Heart right ventricle (tissue), 16 donors: ENCODE measurements at regions of chr18 and their contacts with region 1.

Region 1: GRCh38 chr18:29596959-29597358 is 1420.0 kb upstream of the CDH2 start:
- DNase-seq: no peak
- ATAC-seq: no peak
- H3K4me3 ChIP-seq: no peak overlapping the region
- H3K27ac ChIP-seq: no peak overlapping the region
- H3K4me1 ChIP-seq: no peaks in the 10 kb centered on the region
- H3K27me3 ChIP-seq: no peaks in the 10 kb centered on the region
- CTCF ChIP-seq: no peak

Region 2: GRCh38 chr18:29626094-29626493 is 29.1 kb after region 1 on chr18:
- intact Hi-C with region 1: loop called in 1 of 10 experiments (anchors 2 kb)
- DNase-seq: no peak
- ATAC-seq: no peak
- H3K4me3 ChIP-seq: no peak overlapping the region
- H3K27ac ChIP-seq: no peak overlapping the region
- H3K4me1 ChIP-seq: no peaks in the 10 kb centered on the region
- H3K27me3 ChIP-seq: no peaks in the 10 kb centered on the region
- CTCF ChIP-seq: no peak

Region 3: GRCh38 chr18:29811519-29811918 is 214.6 kb after region 1 on chr18:
- intact Hi-C with region 1: no loop called
- DNase-seq: no peak
- ATAC-seq: no peak
- H3K4me3 ChIP-seq: no peak overlapping the region
- H3K27ac ChIP-seq: no peak overlapping the region
- H3K4me1 ChIP-seq: no peaks in the 10 kb centered on the region
- H3K27me3 ChIP-seq: no peaks in the 10 kb centered on the region
- CTCF ChIP-seq: no peak